Activated T-helper 2 cell treated with anti-CD3 and anti-CD28 coated beads, Interferon-gamma antibody, Interleukin-2, Interleukin-4, amounts not matched to agents 10 μg/mL and 5 μg/mL and 100 μg/mL, durations not matched to agents 14 hours and 24 hours and 36 hours (primary cell): ENCODE measurements at regions of chr16 and their contacts with region 1.

Region 1: DNA sequence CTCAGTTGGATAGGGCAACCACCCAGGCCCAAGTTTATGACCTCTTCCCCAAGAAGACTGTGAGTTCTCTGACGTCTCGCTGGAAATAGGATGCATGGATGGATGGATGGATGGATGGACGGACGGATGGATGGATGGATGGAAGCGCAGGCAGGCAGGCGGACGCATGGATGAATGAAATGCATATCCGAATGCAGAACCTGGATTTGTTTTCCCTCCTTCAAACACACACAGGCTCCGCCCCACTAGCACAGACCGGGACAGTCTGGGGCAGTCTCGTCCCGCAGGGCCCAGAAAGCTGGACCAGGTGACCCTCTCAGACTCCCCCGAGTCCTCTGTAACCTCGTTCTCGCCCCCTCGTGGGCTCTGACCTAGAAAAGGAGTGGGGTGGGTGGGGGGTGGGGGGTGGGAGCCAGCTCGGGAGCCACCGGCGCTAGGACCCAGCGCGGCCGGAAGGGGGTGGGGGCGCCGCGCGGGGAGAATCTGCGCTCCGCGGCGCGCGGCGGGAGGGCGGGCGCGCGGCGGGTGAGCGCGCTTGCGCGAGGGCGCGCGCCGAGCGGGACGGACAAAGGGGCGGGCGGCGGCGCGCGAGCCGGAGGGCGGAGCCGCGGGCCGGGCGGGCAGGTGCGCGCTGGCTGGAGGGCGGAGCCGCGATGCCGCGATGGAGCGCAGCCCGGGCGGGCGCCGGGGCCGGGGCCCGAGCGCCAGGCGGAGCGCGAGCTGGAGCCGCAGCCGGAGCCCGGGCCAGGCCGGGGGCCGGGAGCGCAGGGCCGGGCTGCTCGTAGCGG is at the start of gene SBK1:
- DNase-seq: peak; percentile 81
- H3K4me3 Mint-ChIP-seq: peak within 1 kb of the TSS; percentile 76
- H3K27ac Mint-ChIP-seq: peak within 1 kb of the TSS; percentile 62
- H3K4me1 Mint-ChIP-seq: peaks cover 31% of the 10 kb centered on the region
- H3K27me3 Mint-ChIP-seq: peaks cover 22% of the 10 kb centered on the region
- total RNA-seq, gene SBK1: 1.3 and 1.4 TPM in 2 replicates

Region 2: GRCh38 chr16:28309811-28310311 is 17.8 kb after region 1 on chr16:
- intact Hi-C with region 1: loop called (anchors 2 kb)
- DNase-seq: peak; percentile 69
- H3K4me3 Mint-ChIP-seq: peak overlapping the region; percentile 37
- H3K27ac Mint-ChIP-seq: peak overlapping the region; percentile 54
- H3K4me1 Mint-ChIP-seq: peaks cover 24% of the 10 kb centered on the region
- H3K27me3 Mint-ChIP-seq: no peaks in the 10 kb centered on the region